Psoas muscle (tissue), 8 donors: ENCODE measurements at regions of chrX and their contacts with region 1.

Region 1: GRCh38 chrX:20789103-20789502 is 522.4 kb upstream of the RPS6KA3 start:
- DNase-seq: no peak
- ATAC-seq: no peak
- H3K4me3 ChIP-seq: no peak overlapping the region
- H3K27ac ChIP-seq: no peak overlapping the region
- H3K4me1 ChIP-seq: no peaks in the 10 kb centered on the region
- H3K27me3 ChIP-seq: no peaks in the 10 kb centered on the region
- CTCF ChIP-seq: no peak

Region 2: DNA sequence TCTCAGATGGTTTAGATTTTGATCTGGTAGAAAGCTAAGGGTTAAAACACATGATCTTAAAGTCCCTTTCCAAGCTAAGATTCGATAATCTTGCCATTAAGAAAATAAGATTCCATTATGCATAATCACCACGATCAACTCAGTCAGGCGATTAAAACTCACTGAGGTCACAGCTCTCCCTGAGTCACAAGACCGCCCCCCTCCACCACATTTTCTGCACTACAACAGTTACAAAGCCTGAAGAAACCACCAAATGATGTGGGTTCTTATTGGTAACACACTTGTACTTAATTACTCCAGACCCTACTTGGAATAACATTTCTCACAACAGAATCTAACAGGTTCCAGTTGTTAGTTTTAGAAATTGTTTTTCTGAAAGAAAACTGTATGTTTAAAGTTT is 964.5 kb before region 1 on chrX:
- intact Hi-C with region 1: loop called in 1 of 2 experiments (anchors 10 kb)
- DNase-seq: no peak
- ATAC-seq: no peak
- H3K4me3 ChIP-seq: no peak overlapping the region
- H3K27ac ChIP-seq: no peak overlapping the region
- H3K4me1 ChIP-seq: no peaks in the 10 kb centered on the region
- H3K27me3 ChIP-seq: no peaks in the 10 kb centered on the region
- CTCF ChIP-seq: no peak